Activated T-helper 1 cell treated with anti-CD3 and anti-CD28 coated beads, Interleukin-12 subunit alpha, Interleukin-12 subunit beta, Interleukin-2, Interleukin-4 antibody, amounts not matched to agents 30 ng/mL and 10 ng/mL and 1 ng/mL, durations not matched to agents 14 hours and 24 hours and 36 hours (primary cell): ENCODE measurements at regions of chr2 and their contacts with region 1.

Region 1: GRCh38 chr2:11829947-11830707 is 83.7 kb downstream of the LPIN1 start:
- DNase-seq: peak; percentile 59
- H3K4me3 Mint-ChIP-seq: peak overlapping the region; percentile 76
- H3K27ac Mint-ChIP-seq: peak overlapping the region; percentile 75
- H3K4me1 Mint-ChIP-seq: peaks cover 44% of the 10 kb centered on the region
- H3K27me3 Mint-ChIP-seq: peaks cover 37% of the 10 kb centered on the region

Region 2: GRCh38 chr2:11344342-11344955 is 485.7 kb before region 1 on chr2 and contains the start of gene ROCK2:
- intact Hi-C with region 1: loop called (anchors 10 kb)
- DNase-seq: peak; percentile 62
- H3K4me3 Mint-ChIP-seq: peak within 1 kb of the TSS; percentile 99
- H3K27ac Mint-ChIP-seq: peak within 1 kb of the TSS; percentile 95
- H3K4me1 Mint-ChIP-seq: peaks cover 35% of the 10 kb centered on the region
- H3K27me3 Mint-ChIP-seq: peaks cover 14% of the 10 kb centered on the region
- total RNA-seq, gene ROCK2: 20.5 and 21.7 TPM in 2 replicates

Region 3: GRCh38 chr2:11775384-11775783 is 54.7 kb before region 1 on chr2:
- intact Hi-C with region 1: no loop called
- DNase-seq: no peak
- H3K4me3 Mint-ChIP-seq: peak overlapping the region; percentile 67
- H3K27ac Mint-ChIP-seq: peak overlapping the region; percentile 82
- H3K4me1 Mint-ChIP-seq: peaks cover 63% of the 10 kb centered on the region
- H3K27me3 Mint-ChIP-seq: no peaks in the 10 kb centered on the region

Region 4: GRCh38 chr2:11863513-11864328 is 33.6 kb after region 1 on chr2:
- intact Hi-C with region 1: loop called (anchors 2 kb)
- DNase-seq: peak; percentile 22
- H3K4me3 Mint-ChIP-seq: no peak overlapping the region
- H3K27ac Mint-ChIP-seq: no peak overlapping the region
- H3K4me1 Mint-ChIP-seq: peaks cover 9% of the 10 kb centered on the region
- H3K27me3 Mint-ChIP-seq: peaks cover 19% of the 10 kb centered on the region

Region 5: DNA sequence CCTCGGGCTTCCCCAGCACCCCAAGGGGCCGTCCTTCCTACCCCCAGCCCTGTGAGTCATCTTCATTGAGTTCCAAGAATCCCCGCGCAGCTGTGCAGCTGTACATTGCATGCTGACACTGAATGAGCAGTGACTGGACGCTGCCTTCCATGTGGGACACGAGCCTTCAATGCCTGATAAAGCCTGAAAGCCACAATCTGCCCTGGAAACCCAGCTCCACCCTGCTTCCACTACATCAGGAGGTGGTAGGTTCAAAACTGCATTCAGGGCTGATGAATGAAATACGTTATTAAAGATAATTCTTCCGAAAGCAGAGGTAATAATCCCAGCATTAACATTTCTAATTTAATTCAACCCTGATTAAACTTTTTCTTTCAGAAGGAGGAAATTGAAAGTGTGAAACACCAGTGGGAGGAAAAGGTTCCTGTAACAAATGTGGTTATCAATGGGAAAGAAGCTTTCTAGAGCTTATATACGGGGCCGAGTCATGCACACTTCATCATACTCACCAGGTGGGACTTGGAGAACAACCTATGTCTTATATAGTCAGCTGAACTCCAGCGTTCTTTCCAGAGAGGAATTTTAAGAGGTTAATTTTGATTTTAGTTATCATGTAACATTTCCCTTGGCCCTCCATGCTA is 276.4 kb after region 1 on chr2:
- intact Hi-C with region 1: loop called (anchors 5 kb)
- DNase-seq: no peak
- H3K4me3 Mint-ChIP-seq: no peak overlapping the region
- H3K27ac Mint-ChIP-seq: no peak overlapping the region
- H3K4me1 Mint-ChIP-seq: peaks cover 31% of the 10 kb centered on the region
- H3K27me3 Mint-ChIP-seq: peaks cover 13% of the 10 kb centered on the region

Region 6: DNA sequence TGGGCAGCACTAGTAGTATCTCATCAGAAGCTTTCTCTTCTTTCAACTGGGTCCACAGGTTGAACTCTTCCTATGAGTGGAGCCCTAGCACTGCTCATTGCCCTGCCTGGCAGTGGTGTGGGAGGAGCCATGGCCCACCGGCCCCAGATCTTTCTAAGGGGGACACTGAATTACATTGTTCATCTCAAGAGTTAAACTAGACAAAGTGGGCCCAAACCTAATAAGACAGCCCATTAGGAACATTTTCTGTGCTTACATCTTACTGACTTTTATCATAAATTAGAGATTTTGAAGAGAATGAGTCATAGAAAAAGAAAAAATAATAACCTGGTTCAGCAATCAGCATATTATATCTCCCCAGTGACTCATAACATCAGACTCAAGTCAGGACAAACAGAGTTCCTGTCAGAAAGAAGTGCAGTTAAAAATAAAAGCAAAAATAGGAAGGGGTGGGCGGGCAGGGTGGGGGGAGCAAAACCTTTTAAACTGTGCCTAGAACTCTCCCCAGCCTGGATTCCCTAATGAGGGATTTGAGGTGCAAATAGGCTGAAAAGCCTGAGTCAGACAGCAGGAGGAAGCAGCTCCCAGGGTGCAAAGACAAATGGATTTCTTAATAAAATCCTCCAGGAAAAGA is 725.0 kb after region 1 on chr2:
- intact Hi-C with region 1: loop called (anchors 2 kb)
- DNase-seq: no peak
- H3K4me3 Mint-ChIP-seq: peak overlapping the region; percentile 44
- H3K27ac Mint-ChIP-seq: peak overlapping the region; percentile 88
- H3K4me1 Mint-ChIP-seq: peaks cover 41% of the 10 kb centered on the region
- H3K27me3 Mint-ChIP-seq: no peaks in the 10 kb centered on the region

Region 7: GRCh38 chr2:12965540-12966269 is 1135.6 kb after region 1 on chr2:
- intact Hi-C with region 1: loop called (anchors 1 kb)
- DNase-seq: no peak
- H3K4me3 Mint-ChIP-seq: peak overlapping the region; percentile 12
- H3K27ac Mint-ChIP-seq: peak overlapping the region; percentile 21
- H3K4me1 Mint-ChIP-seq: peaks cover 23% of the 10 kb centered on the region
- H3K27me3 Mint-ChIP-seq: peaks cover 13% of the 10 kb centered on the region